Spleen (tissue), 13 donors: ENCODE measurements at regions of chr2 and their contacts with region 1.

Region 1: GRCh38 chr2:30239986-30240752 is 8.8 kb downstream of the LBH start:
- DNase-seq: no peak
- H3K4me3 ChIP-seq: peak overlapping the region in 1 of 8 donors; percentile 24
- H3K27ac ChIP-seq: peak overlapping the region in 7 of 8 donors; percentile 41 to 98 (median 71)
- H3K4me1 ChIP-seq: peaks cover 70 to 100% (median 95%) of the 10 kb centered on the region in 6 donors
- H3K27me3 ChIP-seq: no peaks in the 10 kb centered on the region
- CTCF ChIP-seq: no peak
- POLR2A ChIP-seq: no peak

Region 2: DNA sequence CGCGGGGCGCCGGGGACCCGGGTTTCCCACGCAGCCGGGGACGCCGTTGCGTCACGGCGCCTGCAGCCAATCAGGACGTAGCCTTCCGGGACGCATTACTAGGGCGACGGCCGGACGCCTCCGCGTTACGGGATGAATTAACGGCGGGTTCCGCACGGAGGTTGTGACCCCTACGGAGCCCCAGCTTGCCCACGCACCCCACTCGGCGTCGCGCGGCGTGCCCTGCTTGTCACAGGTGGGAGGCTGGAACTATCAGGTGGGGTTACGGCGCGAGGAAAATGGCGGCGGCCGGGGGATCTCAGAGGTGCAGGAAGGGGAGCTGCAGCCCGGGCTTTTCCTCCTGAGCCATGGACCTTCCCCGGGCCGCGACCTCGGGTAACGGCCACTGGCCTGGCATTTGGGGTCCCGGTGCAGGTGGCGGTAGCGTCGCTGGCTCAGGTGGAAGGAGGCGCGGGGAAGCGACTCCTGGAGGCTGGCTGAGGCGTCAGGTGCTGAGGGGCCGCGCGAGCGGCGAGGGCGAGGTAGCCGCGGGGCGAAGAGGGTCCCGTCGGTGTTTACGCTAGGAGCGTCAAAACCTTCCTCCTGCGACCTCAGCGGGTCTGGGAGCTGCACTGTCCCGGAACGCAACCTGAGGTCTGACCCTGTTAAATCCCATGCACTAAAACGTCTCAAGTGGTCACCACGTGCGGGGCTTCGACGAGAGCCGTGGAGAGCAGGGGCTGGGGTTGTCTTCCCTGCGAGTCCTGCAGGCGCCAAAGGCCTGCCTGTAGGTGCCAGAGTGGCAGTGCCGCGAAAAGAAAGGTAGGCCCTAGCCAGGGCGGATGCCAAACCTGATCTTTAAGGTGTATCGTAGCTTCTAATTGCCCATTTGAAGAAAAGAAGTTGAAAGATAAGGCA is 207.2 kb after region 1 on chr2 and contains the start of gene LCLAT1:
- intact Hi-C with region 1: loop called (anchors 10 kb)
- DNase-seq: peak; percentile 97
- H3K4me3 ChIP-seq: peak within 1 kb of the TSS; percentile 87 to 98 (median 94)
- H3K27ac ChIP-seq: peak within 1 kb of the TSS; percentile 53 to 88 (median 84)
- H3K4me1 ChIP-seq: peaks cover 4 to 42% (median 23%) of the 10 kb centered on the region in 6 donors
- H3K27me3 ChIP-seq: no peaks in the 10 kb centered on the region
- CTCF ChIP-seq: no peak
- POLR2A ChIP-seq: no peak
- total RNA-seq, gene LCLAT1: 11.8 to 23.3 (median 17.7) TPM

Region 3: GRCh38 chr2:30932870-30933269 is 692.7 kb after region 1 on chr2:
- intact Hi-C with region 1: no loop called
- DNase-seq: no peak
- H3K4me3 ChIP-seq: no peak overlapping the region
- H3K27ac ChIP-seq: no peak overlapping the region
- H3K4me1 ChIP-seq: no peaks in the 10 kb centered on the region
- H3K27me3 ChIP-seq: no peaks in the 10 kb centered on the region
- CTCF ChIP-seq: no peak
- POLR2A ChIP-seq: no peak